Activated B cell treated with CpG ODN at 0.5 μM for 24 hours (primary cell): ENCODE measurements at regions of chr17 and their contacts with region 1.

Region 1: DNA sequence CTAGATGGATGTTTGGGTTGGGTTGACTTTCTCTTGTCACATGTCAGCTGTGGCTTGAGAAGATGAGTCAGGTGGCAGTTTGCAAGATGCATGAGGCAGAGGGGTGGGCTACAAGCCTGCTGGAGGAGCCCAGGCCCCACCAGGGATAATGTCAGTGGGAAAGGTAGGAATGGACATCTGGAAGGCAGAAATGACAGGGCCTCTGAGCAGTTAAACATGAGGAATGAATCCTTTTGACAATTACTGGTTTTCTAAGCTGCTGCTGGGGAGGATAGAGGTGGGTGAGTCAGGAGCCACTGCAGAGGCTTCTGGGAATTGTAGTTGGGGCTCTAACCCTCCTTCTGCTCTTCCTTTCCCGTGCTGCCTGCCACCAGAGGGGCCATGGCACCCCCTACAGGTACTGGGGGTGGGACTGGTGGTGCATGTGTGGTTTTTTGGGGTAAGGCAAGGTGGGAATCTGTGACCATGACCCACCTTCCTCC is 15.7 kb downstream of the SLC52A1 start:
- DNase-seq: peak; percentile 31
- ATAC-seq: peak; percentile 49
- H3K4me3 Mint-ChIP-seq: no peak overlapping the region
- H3K27ac Mint-ChIP-seq: peak overlapping the region; percentile 32
- H3K4me1 Mint-ChIP-seq: peaks cover 28% of the 10 kb centered on the region
- H3K27me3 Mint-ChIP-seq: no peaks in the 10 kb centered on the region
- CTCF ChIP-seq: no peak

Region 2: GRCh38 chr17:4939796-4940624 is 79.5 kb before region 1 on chr17 and contains the starts of genes RNF167 and SLC25A11:
- CTCF ChIA-PET with region 1: no interaction called
- POLR2A ChIA-PET with region 1: interaction called, 10 read pairs
- intact Hi-C with region 1: loop called (anchors 2 kb)
- DNase-seq: peak; percentile 93
- ATAC-seq: peak; percentile 84
- H3K4me3 Mint-ChIP-seq: peak within 1 kb of the TSS; percentile 97
- H3K27ac Mint-ChIP-seq: peak within 1 kb of the TSS; percentile 98
- H3K4me1 Mint-ChIP-seq: peaks cover 69% of the 10 kb centered on the region
- H3K27me3 Mint-ChIP-seq: no peaks in the 10 kb centered on the region
- CTCF ChIP-seq: no peak
- total RNA-seq, gene RNF167: 93.3 and 108 TPM in 2 replicates
- total RNA-seq, gene SLC25A11: 35.3 and 35.8 TPM in 2 replicates

Region 3: DNA sequence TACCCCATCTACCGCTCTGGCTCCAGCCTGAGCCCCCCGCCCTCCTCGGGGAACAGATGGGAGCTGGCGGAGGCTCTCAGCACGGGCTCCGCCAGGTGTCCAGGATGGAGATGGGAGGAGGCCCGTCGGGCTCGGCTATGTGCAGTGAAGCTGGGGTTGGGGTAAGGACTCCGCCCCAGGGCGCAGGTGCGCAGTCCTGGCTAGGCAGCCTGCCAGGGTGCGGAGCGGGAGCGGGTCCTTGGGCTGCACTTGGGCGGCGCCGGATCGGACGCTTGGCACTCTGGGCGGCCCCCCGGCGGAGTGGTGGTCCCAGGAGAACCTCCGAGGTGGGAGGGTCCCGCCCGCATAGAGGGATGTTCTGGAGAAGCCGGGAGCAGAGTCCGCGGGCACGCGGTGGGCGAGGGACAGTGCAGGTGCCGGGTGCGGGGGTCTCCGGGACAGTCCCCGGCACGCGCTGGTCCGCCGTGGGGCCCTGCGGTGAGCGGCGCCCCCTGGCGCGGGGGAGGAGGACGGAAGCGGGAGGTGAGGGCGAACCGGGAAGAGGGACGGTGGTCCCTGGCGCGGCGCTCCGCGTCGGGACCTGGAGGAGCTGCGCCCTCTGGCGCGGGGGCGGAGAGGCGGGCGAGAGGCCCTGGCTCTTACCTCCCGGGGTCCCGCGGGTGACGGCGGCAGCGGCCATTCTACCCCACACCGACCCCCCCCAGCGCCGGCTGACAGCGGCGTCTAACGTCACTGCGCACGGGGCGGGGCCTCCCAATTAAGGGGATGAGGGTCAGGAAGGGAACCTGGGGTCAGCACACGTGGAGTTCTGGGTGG is 32.4 kb before region 1 on chr17 and contains the start of gene CAMTA2:
- CTCF ChIA-PET with region 1: no interaction called
- POLR2A ChIA-PET with region 1: interaction called, 11 read pairs
- intact Hi-C with region 1: loop called (anchors 1 kb)
- DNase-seq: peak; percentile 88
- ATAC-seq: peak; percentile 80
- H3K4me3 Mint-ChIP-seq: peak within 1 kb of the TSS; percentile 92
- H3K27ac Mint-ChIP-seq: peak within 1 kb of the TSS; percentile 93
- H3K4me1 Mint-ChIP-seq: peaks cover 32% of the 10 kb centered on the region
- H3K27me3 Mint-ChIP-seq: no peaks in the 10 kb centered on the region
- CTCF ChIP-seq: no peak
- total RNA-seq, gene CAMTA2: 45.9 and 57.9 TPM in 2 replicates

Region 4: GRCh38 chr17:5047446-5047845 is 27.9 kb after region 1 on chr17:
- CTCF ChIA-PET with region 1: no interaction called
- POLR2A ChIA-PET with region 1: interaction called, 11 read pairs
- intact Hi-C with region 1: no loop called
- DNase-seq: no peak
- ATAC-seq: no peak
- H3K4me3 Mint-ChIP-seq: no peak overlapping the region
- H3K27ac Mint-ChIP-seq: peak overlapping the region; percentile 41
- H3K4me1 Mint-ChIP-seq: peaks cover 33% of the 10 kb centered on the region
- H3K27me3 Mint-ChIP-seq: no peaks in the 10 kb centered on the region
- CTCF ChIP-seq: no peak

Region 5: DNA sequence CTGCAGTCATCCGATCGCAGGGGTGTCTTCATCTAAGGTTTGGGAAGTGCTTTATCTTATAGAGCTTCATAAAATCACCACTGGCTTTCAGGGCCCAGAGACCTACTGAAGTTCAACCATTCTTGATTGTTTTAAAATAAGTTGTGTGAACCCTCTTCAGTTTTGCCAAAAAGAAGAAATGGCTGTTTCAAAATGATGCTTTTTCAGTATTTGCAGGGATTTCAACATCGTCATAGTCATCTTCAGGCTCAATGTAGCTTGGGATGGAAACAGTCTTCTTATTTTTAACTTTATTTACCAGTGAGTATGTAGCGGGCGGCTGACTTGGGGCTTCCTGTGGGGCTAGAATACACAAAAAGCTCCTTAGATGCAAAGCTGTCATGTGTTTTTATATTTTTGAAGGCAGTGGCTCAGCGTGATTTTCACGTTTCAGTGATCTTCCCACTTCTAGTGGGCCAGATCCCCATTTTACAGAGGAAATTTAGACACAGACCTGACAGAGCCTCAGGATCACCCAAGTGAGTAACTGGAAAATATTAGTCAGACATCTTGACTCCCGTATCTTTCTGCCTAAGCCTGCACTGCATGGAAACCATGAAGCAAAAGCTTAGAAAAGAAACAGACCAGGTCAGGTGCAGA is 191.2 kb after region 1 on chr17:
- CTCF ChIA-PET with region 1: no interaction called
- POLR2A ChIA-PET with region 1: no interaction called
- intact Hi-C with region 1: no loop called
- DNase-seq: no peak
- ATAC-seq: peak; percentile 74
- H3K4me3 Mint-ChIP-seq: peak overlapping the region; percentile 68
- H3K27ac Mint-ChIP-seq: peak overlapping the region; percentile 96
- H3K4me1 Mint-ChIP-seq: peaks cover 78% of the 10 kb centered on the region
- H3K27me3 Mint-ChIP-seq: no peaks in the 10 kb centered on the region
- CTCF ChIP-seq: no peak

Region 6: DNA sequence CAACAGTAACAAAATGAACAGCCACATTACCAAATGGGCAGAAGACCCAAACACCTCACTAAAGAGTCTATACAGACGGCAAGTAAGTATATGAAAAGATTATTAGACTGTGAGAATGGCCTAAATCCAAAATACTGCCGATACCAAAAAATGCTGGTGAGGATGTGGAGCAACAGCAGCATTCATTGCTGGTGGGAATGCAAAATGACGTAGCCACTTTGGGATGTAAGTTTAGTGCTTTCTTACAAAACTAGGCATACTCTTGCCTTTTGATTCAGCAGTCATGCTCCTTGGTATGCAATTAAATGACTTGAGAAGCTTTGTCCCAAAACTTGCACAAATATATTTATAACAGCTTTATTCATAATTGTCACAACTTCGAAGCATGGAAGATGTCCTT is 306.3 kb after region 1 on chr17:
- CTCF ChIA-PET with region 1: no interaction called
- POLR2A ChIA-PET with region 1: no interaction called
- intact Hi-C with region 1: no loop called
- DNase-seq: no peak
- ATAC-seq: no peak
- H3K4me3 Mint-ChIP-seq: no peak overlapping the region
- H3K27ac Mint-ChIP-seq: no peak overlapping the region
- H3K4me1 Mint-ChIP-seq: peaks cover 55% of the 10 kb centered on the region
- H3K27me3 Mint-ChIP-seq: no peaks in the 10 kb centered on the region
- CTCF ChIP-seq: no peak